ENCODE measurements at regions of chr7 and their contacts with region 1.

Region 1: GRCh38 chr7:87152107-87152844 is at the start of gene DMTF1:
- DNase-seq: peak; percentile 92
- H3K4me3 Mint-ChIP-seq: peak within 1 kb of the TSS; percentile 91
- H3K27ac Mint-ChIP-seq: peak within 1 kb of the TSS; percentile 96
- H3K4me1 Mint-ChIP-seq: peaks cover 42% of the 10 kb centered on the region
- H3K27me3 Mint-ChIP-seq: no peaks in the 10 kb centered on the region
- total RNA-seq, gene DMTF1: 62.7 to 71.1 TPM

Region 2: GRCh38 chr7:86814661-86815379 is 337.5 kb before region 1 on chr7:
- CTCF ChIA-PET with region 1: no interaction called
- POLR2A ChIA-PET with region 1: no interaction called
- intact Hi-C with region 1: no loop called
- DNase-seq: no peak
- H3K4me3 Mint-ChIP-seq: no peak overlapping the region
- H3K27ac Mint-ChIP-seq: no peak overlapping the region
- H3K4me1 Mint-ChIP-seq: no peaks in the 10 kb centered on the region
- H3K27me3 Mint-ChIP-seq: peaks cover 2% of the 10 kb centered on the region

Region 3: DNA sequence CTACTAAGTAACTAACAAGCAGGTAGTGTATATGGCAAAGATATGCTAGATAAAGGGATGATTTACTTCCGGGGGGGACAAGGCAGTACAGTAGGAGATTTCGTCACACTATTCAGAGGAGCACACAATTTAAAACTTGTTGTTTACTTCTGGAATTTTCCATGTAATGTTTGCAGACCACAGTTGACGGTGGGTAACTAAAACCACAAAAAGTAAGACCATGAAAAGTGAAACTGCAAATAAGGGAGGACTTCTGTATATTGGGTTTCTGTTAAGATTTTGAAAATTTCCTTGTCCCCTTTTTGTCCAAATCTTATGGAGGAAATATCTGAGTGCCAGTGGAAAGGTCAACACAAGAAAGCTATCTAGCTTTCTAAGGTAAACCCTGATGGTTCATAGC is 262.8 kb before region 1 on chr7:
- CTCF ChIA-PET with region 1: no interaction called
- POLR2A ChIA-PET with region 1: no interaction called
- intact Hi-C with region 1: no loop called
- DNase-seq: no peak
- H3K4me3 Mint-ChIP-seq: no peak overlapping the region
- H3K27ac Mint-ChIP-seq: no peak overlapping the region
- H3K4me1 Mint-ChIP-seq: no peaks in the 10 kb centered on the region
- H3K27me3 Mint-ChIP-seq: no peaks in the 10 kb centered on the region

Region 4: GRCh38 chr7:86939197-86939814 is 213.0 kb before region 1 on chr7:
- CTCF ChIA-PET with region 1: interaction called, 43 read pairs
- POLR2A ChIA-PET with region 1: no interaction called
- intact Hi-C with region 1: loop called (anchors 1 kb)
- DNase-seq: no peak
- H3K4me3 Mint-ChIP-seq: no peak overlapping the region
- H3K27ac Mint-ChIP-seq: no peak overlapping the region
- H3K4me1 Mint-ChIP-seq: no peaks in the 10 kb centered on the region
- H3K27me3 Mint-ChIP-seq: no peaks in the 10 kb centered on the region

Region 5: DNA sequence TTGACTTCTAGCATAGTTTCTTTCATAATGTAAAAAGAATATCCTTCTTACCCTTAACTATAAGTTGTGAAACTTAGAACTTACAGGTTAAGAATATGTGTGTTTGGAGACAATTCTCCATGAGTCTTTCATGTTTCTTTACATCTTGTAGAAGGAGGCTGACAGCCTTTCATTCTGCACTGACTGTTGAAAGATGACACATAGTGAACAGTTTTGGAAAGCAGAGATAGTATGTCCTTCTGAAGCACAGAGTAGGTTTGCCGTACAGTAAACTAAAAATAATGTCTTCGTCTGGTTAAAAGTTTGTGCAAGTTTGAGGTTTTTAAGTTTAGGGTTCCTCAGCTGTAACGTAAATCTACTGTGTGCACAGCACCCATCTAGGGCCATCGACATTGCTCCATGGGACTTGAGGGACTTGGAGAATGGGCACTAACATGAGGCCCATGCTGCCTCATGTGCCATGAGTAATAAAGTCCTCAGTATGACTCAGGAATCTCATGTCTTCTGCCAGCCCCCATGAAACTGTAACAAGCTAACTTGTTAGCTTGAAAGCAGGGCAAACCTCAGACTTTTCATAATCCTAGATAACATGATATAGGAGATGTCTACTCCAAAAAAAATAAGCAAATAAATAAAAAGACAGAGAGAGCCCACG is 68.3 kb before region 1 on chr7:
- CTCF ChIA-PET with region 1: interaction called, 3 read pairs
- POLR2A ChIA-PET with region 1: no interaction called
- intact Hi-C with region 1: loop called (anchors 5 kb)
- DNase-seq: peak; percentile 11
- H3K4me3 Mint-ChIP-seq: no peak overlapping the region
- H3K27ac Mint-ChIP-seq: no peak overlapping the region
- H3K4me1 Mint-ChIP-seq: peaks cover 9% of the 10 kb centered on the region
- H3K27me3 Mint-ChIP-seq: peaks cover 2% of the 10 kb centered on the region

Region 6: GRCh38 chr7:87219545-87220025 is 67.3 kb after region 1 on chr7 and contains the start of gene TMEM243:
- CTCF ChIA-PET with region 1: interaction called, 53 read pairs
- POLR2A ChIA-PET with region 1: interaction called, 104 read pairs
- intact Hi-C with region 1: loop called (anchors 1 kb)
- DNase-seq: peak; percentile 90
- H3K4me3 Mint-ChIP-seq: peak within 1 kb of the TSS; percentile 99
- H3K27ac Mint-ChIP-seq: peak within 1 kb of the TSS; percentile 96
- H3K4me1 Mint-ChIP-seq: peaks cover 32% of the 10 kb centered on the region
- H3K27me3 Mint-ChIP-seq: no peaks in the 10 kb centered on the region
- total RNA-seq, gene TMEM243: 44.7 to 47.8 TPM

Region 7: GRCh38 chr7:87510411-87510875 is 358.2 kb after region 1 on chr7:
- CTCF ChIA-PET with region 1: no interaction called
- POLR2A ChIA-PET with region 1: no interaction called
- intact Hi-C with region 1: no loop called
- DNase-seq: no peak
- H3K4me3 Mint-ChIP-seq: no peak overlapping the region
- H3K27ac Mint-ChIP-seq: no peak overlapping the region
- H3K4me1 Mint-ChIP-seq: no peaks in the 10 kb centered on the region
- H3K27me3 Mint-ChIP-seq: no peaks in the 10 kb centered on the region

Region 8: DNA sequence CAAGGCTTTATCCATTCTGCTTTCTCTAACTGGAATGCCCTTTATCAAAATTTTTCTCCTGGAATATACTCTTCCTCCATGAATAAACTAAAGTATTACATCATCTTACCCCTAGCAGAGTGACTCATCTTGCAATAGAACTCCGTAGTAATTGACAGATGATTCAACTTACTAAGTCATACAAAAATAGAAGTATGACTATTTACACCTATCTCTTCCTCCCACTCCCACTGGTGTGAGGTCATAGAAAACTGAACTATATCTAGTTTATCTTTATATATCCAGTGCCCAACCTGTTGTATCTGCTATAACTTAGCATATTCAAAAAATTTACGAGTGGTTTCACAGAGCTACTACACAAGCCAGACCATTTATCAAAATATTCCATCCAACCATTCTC is 422.4 kb after region 1 on chr7:
- CTCF ChIA-PET with region 1: no interaction called
- POLR2A ChIA-PET with region 1: no interaction called
- intact Hi-C with region 1: loop called (anchors 5 kb)
- DNase-seq: no peak
- H3K4me3 Mint-ChIP-seq: no peak overlapping the region
- H3K27ac Mint-ChIP-seq: no peak overlapping the region
- H3K4me1 Mint-ChIP-seq: peaks cover 12% of the 10 kb centered on the region
- H3K27me3 Mint-ChIP-seq: no peaks in the 10 kb centered on the region